H1 (cell line): ENCODE measurements at regions of chr2 and their contacts with region 1.

Region 1: GRCh38 chr2:240060977-240061591 is 7.8 kb upstream of the OR6B3 start:
- DNase-seq: no peak
- H3K4me3 ChIP-seq: no peak overlapping the region
- H3K27ac ChIP-seq: no peak overlapping the region
- H3K4me1 ChIP-seq: no peaks in the 10 kb centered on the region; a peak in 2 of 7 replicates
- H3K27me3 ChIP-seq: no peaks in the 10 kb centered on the region
- CTCF ChIP-seq: peak in 2 of 3 experiments; percentile 58 to 63; a peak in 3 of 4 replicates
- EP300 ChIP-seq: no peak
- POLR2A ChIP-seq: no peak
- RAD21 ChIP-seq: peak; percentile 83 to 86

Region 2: DNA sequence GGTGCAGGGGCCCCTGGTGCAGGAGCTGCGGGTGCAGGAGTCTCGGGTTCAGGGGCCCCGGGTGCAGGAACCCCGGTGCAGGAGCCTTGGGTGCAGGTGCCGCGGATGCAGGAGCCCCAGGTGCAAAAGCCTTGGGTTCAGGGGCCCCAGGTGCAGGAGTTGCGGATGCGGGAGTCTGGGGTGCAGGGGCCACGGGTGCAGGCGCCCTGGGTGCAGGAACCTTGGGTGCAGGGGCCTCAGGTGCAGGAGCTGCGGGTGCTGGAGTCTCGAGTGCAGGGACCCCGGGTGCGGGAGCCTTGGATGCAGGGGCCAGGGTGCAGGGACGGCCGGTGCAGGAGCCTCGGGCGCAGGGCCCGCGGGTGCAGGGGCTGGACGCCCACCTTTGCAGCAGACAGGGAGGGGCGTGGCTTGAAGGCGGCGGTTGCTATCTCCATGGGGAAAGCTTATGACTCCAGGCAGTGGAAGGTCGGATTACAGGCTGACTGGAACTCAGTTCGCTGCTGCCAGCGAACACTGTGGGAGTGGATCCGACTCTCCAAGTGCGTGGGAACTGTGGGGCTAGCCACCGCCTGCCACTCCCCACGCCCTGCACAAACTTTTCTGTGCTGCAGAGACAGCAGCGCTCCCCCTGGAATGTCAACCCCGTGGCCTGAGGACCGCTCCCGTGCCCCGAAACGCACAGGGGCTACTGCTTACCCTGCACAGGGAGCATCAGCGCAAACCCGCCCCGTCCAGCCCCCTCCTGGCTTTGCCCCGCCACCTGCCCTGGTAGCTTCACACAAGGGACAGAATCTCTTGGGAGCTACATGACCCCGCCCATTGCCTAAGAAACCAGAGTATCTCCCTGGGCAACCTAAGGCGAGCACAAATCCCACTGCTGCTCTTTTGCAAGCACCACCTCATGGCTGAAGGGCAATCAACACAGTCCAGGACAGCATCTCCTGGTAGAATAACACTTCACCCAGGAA is 34.8 kb after region 1 on chr2:
- CTCF ChIA-PET with region 1: no interaction called
- POLR2A ChIA-PET with region 1: no interaction called
- DNase-seq: peak in 1 of 2 experiments; percentile 71
- H3K4me3 ChIP-seq: peak overlapping the region; percentile 31 to 67 (median 63)
- H3K27ac ChIP-seq: no peak overlapping the region
- H3K4me1 ChIP-seq: peaks cover 0 to 3% (median 1%) of the 10 kb centered on the region in 4 experiments; a peak in 3 of 7 replicates
- H3K27me3 ChIP-seq: peaks cover 0 to 12% (median 7%) of the 10 kb centered on the region in 4 experiments; a peak in 4 of 7 replicates
- CTCF ChIP-seq: no peak
- EP300 ChIP-seq: no peak
- POLR2A ChIP-seq: no peak
- RAD21 ChIP-seq: no peak

Region 3: DNA sequence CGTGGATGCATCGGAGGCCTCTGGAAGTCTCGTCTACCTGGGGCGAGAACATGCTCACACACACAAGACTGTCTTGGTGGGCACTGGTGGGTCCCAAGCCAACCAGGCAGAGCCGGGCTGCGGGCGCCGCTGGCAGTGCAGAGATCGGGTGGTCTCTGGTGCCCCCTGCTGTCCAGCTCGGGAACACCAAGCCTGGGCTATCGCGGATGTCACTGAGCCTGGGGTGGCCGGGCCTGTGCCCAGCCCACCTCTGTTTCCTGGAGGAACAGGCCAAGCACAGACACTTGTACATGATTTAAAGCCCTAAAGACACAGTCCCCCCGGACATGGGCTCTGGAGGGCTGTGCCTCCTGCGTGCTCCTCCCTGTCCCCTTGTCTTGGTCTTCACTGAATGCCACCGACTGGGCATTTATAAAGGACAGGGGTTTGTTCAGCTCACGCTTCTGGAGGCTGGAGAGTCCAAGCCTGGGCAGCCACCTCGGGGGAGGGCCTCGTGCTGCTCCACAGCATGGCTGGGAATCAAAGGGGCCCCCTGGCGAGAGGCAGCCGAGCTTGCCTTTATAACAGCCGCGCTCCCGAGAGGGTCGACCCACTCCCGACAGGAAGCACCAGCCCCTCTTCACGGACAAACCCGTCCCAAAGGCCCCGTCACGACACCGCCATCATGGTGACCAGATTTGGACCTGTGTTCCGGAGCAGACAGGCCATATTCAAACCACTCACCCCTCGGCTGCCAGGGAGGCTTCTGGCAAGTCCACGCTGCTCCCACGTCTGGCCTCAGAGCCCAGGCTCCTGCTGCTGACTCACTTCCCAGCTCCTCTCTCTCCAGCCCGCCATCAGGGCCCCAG is 82.9 kb after region 1 on chr2:
- CTCF ChIA-PET with region 1: interaction called, 23 read pairs
- POLR2A ChIA-PET with region 1: no interaction called
- DNase-seq: peak; percentile 50 to 98
- H3K4me3 ChIP-seq: no peak overlapping the region
- H3K27ac ChIP-seq: no peak overlapping the region
- H3K4me1 ChIP-seq: peaks cover 0 to 14% (median 10%) of the 10 kb centered on the region in 4 experiments; a peak in 6 of 7 replicates
- H3K27me3 ChIP-seq: no peaks in the 10 kb centered on the region
- CTCF ChIP-seq: peak in 2 of 3 experiments; percentile 94 to 96; a peak in 3 of 4 replicates
- EP300 ChIP-seq: no peak
- POLR2A ChIP-seq: no peak
- RAD21 ChIP-seq: peak; percentile 97 to 99